ENCODE measurements at regions of chr15 and their contacts with region 1.

Region 1: DNA sequence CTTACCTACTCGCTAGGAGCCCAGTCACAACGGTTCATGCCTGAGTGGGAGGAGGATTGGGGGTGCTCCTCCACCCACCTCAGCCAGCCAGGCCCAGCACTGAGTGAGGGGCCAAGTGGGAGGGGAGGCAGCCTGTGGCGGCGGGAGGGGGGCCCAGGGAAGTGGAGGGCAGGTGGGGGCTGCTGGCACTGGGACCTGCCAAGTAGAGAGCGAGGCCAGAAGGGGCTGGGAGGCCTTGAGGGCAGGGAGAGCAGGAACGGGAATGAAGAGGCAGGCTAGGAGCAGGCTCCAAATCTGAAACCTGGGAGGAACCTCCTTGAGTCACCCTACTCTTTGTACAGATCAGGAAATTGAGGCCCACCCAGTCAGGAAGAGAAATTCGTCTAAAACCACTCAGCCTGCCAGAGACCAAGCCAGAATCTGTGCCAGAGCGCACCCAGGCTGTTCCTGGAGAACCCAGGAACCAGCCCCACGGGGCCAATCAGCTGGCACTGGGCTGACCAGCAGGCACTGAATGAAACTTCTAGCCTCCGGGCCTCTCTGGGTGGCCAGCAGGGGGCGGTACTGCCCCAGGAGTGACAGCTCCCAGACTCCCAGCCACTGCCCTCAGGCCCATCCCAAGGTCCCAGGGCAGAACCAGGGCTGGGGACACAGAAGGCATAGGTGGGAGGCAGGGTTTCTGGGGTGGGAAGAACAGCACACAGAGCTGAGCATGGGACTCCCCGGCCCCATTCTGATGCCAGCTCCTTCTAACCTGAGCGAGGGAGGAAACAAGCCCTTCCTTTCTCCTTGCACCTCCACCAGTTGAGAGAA is 14.8 kb upstream of the CYP11A1 start:
- DNase-seq: peak; percentile 61 to 98 (median 86)
- ATAC-seq: peak; percentile 95
- H3K4me3 ChIP-seq: no peak overlapping the region
- H3K27ac ChIP-seq: no peak overlapping the region
- H3K4me1 ChIP-seq: peaks cover 0 to 36% of the 10 kb centered on the region in 2 donors
- H3K27me3 ChIP-seq: no peaks in the 10 kb centered on the region
- CTCF ChIP-seq: peak; percentile 95 to 98

Region 2: DNA sequence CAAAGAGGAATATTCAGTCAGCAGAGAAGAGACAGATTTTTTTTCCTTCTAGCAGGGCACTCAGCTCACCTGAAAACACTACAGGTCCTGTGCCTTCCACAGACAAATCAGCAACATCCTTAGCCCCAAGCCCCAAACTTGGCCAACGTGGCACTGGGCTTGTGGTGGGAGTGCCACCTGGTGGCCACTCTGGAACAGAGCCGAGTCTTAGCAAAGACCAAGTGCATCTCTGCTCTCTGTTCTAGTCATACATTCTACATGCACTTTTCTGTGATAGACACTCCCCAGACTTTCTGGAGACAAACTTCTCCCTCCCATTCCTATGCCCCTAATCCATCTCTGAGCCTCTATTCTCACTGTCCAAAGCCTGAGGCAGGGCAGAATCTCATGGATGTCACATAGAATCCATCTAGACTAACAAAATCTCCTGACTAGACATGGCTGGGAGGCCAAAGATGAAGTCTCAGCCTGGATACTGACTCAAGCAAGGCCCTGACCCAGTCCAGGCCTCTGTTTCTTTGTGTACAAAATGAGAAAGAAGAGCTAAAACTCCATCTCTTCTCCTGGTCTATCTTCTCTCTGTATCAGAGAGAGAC is 56.6 kb after region 1 on chr15:
- intact Hi-C with region 1: loop called (anchors 5 kb)
- DNase-seq: peak; percentile 60 to 93 (median 74)
- ATAC-seq: peak; percentile 81
- H3K4me3 ChIP-seq: no peak overlapping the region
- H3K27ac ChIP-seq: no peak overlapping the region
- H3K4me1 ChIP-seq: peaks cover 0 to 8% of the 10 kb centered on the region in 2 donors
- H3K27me3 ChIP-seq: no peaks in the 10 kb centered on the region
- CTCF ChIP-seq: peak; percentile 89 to 93

Measured in left lung (tissue), 14 donors.